Sciatic nerve (tissue), 2 donors: ENCODE measurements at regions of chr3 and their contacts with region 1.

Region 1: DNA sequence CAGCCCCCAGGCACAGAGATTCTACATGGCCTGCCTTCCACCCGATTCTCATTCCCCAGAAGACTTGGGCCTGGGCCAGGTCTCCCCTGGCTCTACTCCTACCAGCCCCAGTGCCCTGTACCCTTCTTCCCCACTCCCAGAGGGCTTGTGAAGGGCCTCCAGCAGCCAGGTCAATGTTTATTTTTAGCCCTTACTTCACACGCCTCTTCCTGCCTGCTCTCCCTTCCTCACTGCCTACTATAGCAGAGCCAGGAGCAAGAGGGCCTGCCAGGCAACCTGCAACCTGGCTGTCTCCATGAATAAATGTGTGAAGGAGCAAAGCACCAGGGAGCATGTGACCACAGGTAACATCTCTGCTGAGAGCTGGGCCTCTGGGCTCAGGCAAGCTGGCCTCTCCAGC is 26.4 kb upstream of the APEH start:
- DNase-seq: no peak
- ATAC-seq: no peak

Region 2: GRCh38 chr3:49434731-49435130 is 213.0 kb before region 1 on chr3:
- intact Hi-C with region 1: no loop called
- DNase-seq: no peak
- ATAC-seq: no peak

Region 3: DNA sequence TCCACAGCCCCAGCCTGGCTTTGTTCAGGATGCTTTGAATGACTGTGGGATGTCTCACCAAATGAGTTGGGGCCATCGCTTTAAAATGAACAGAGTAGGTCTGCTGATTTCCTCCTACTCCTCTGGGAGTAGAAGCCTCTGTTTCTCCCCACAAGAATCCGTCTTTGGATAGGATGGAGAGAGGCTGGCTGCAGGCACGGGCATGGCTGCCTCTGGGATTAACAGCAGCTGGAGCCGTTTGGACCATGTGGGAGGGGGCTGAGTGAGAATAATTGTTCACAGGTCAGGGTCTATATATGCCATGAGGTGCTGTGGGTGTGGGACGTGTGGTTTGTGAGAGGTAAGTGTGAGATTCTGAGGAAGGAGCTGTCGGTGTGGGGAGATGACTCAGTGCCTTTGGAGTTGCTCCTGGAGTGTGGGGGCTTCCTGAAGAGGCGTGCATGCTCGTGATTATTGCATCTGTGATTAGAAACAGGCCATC is 21.6 kb before region 1 on chr3:
- intact Hi-C with region 1: loop called (anchors 2 kb)
- DNase-seq: no peak
- ATAC-seq: no peak